ENCODE measurements at regions of chr11 and their contacts with region 1.

Region 1: GRCh38 chr11:34512840-34513681 is 533 bp downstream of the ELF5 start:
- DNase-seq: no peak
- H3K4me3 ChIP-seq: no peak overlapping the region
- H3K27me3 ChIP-seq: peaks cover 2% of the 10 kb centered on the region
- CTCF ChIP-seq: peak; percentile 89

Region 2: DNA sequence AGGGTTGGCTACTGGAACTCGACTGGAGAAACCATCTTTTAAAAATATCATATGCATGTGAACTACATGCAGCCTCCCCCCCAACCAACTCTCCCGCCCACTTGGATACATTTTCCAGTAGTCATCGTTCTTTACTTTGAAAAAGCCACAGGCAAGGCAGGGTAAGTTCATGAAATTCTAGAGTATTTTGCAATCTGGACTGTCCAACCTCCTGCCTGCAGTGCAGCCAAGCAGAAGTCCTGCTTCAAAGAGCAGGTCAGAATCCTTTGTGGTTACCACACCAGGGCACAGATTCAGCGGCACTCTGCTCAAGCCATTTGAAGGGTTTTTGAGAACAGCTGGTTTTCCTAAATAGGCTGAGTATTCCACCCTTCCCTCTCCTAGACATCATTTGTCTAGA is 11.6 kb before region 1 on chr11:
- CTCF ChIA-PET with region 1: interaction called, 50 read pairs
- POLR2A ChIA-PET with region 1: no interaction called
- DNase-seq: peak; percentile 71
- H3K4me3 ChIP-seq: no peak overlapping the region
- H3K27me3 ChIP-seq: peaks cover 1% of the 10 kb centered on the region
- CTCF ChIP-seq: no peak

Region 3: GRCh38 chr11:34525887-34526636 is 13.0 kb after region 1 on chr11:
- CTCF ChIA-PET with region 1: interaction called, 48 read pairs
- POLR2A ChIA-PET with region 1: no interaction called
- DNase-seq: no peak
- H3K4me3 ChIP-seq: no peak overlapping the region
- H3K27me3 ChIP-seq: peaks cover 15% of the 10 kb centered on the region
- CTCF ChIP-seq: no peak

Region 4: GRCh38 chr11:34537656-34538055 is 24.6 kb after region 1 on chr11:
- CTCF ChIA-PET with region 1: interaction called, 12 read pairs
- POLR2A ChIA-PET with region 1: no interaction called
- DNase-seq: no peak
- H3K4me3 ChIP-seq: no peak overlapping the region
- H3K27me3 ChIP-seq: peaks cover 16% of the 10 kb centered on the region
- CTCF ChIP-seq: no peak

Region 5: DNA sequence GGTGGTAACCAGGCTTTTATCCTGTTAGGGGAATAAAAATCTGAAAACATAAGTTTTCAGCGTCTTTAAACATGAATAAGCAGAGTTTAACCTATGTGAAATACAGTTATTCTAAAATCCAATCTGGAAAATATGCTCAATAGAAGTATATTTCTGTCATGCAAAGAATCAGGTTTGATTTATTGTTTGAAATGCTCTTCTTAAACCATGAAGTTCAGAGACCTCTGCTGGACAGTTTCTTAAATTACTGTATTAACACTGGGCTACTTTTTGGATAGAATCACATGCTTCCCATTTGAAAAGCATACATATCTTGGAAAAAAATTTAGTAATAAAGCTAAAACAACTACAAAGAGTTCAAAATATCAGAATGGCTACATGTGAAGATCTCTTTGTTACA is 377.8 kb after region 1 on chr11:
- CTCF ChIA-PET with region 1: interaction called, 24 read pairs
- POLR2A ChIA-PET with region 1: no interaction called
- DNase-seq: no peak
- H3K4me3 ChIP-seq: no peak overlapping the region
- H3K27me3 ChIP-seq: no peaks in the 10 kb centered on the region
- CTCF ChIP-seq: peak; percentile 40

Region 6: GRCh38 chr11:34997952-34998528 is 485.0 kb after region 1 on chr11:
- CTCF ChIA-PET with region 1: no interaction called
- POLR2A ChIA-PET with region 1: no interaction called
- DNase-seq: no peak
- H3K4me3 ChIP-seq: no peak overlapping the region
- H3K27me3 ChIP-seq: no peaks in the 10 kb centered on the region
- CTCF ChIP-seq: peak; percentile 36